MCF 10A (cell line): ENCODE measurements at regions of chr2 and their contacts with region 1.

Region 1: DNA sequence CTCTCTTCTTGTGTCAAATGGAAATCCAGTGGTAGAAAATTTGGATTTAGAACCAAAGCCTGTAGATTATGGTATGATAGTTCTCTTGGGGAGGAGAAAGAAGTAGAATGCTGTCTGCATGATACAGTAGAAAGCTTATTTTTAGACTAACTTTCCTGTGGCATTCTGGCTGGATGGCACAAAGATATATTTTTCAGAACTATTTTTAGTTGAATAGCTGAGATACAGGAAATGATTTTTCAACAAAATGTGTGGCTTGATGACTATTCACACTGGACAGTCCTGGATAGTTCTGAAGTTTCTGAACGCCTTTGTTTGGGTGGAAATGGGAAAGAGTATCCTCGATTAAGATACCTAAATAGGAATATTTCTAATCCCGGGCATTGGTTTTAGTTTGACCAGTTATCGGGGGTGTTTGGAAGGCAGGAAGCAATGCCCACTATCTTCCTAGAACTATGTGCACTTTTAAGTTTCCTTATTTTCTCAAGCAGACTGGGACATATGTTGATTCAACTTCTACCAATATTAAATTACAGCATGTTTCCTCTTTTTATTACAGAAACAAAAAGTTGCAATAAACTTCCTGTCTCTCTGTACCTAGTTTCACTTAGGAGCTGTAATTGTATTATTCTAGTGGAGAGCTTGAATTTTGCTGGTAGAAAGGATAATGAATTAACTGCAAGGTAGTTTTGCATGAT is 32.1 kb downstream of the GDF7 start:
- DNase-seq: no peak
- H3K4me3 Mint-ChIP-seq: no peak overlapping the region
- H3K27ac Mint-ChIP-seq: no peak overlapping the region
- H3K4me1 Mint-ChIP-seq: no peaks in the 10 kb centered on the region
- H3K27me3 Mint-ChIP-seq: no peaks in the 10 kb centered on the region
- CTCF ChIP-seq: no peak

Region 2: DNA sequence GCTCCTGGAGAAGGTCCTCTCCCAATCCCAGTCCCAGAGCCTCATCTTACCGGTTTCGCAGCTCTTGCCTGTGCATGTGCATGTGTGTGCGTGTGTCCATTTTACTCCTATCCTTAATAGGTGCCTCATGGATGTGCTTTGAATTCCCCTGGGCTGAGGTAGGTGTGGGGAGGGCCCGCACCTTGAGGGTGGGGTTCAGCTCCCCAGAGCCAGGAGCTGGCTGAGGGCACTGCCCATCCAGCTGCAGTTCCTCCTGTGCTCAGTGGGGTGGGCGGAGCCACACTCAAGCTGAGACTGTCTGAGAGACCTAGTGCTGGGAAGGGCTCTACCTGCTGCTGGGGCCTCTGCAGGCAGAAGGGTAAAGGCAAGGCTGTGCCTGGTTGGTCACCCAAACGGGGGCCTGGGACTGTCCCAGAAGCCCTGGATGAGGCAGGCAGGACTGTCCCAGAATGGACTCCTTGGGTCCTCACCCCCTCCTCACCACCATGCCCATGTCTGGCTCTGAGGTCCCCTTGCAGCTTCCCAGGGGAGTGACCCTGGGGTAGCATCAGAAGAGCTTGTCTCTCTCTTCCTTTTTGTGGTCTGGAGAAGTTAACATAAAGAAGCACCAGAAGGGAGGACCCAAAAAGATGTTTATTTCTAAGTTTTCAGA is 23.2 kb before region 1 on chr2:
- CTCF ChIA-PET with region 1: interaction called, 10 read pairs
- POLR2A ChIA-PET with region 1: no interaction called
- intact Hi-C with region 1: no loop called
- DNase-seq: peak; percentile 24
- H3K4me3 Mint-ChIP-seq: no peak overlapping the region
- H3K27ac Mint-ChIP-seq: no peak overlapping the region
- H3K4me1 Mint-ChIP-seq: peaks cover 6% of the 10 kb centered on the region
- H3K27me3 Mint-ChIP-seq: no peaks in the 10 kb centered on the region
- CTCF ChIP-seq: no peak

Region 3: GRCh38 chr2:20728114-20728758 is 29.2 kb after region 1 on chr2:
- CTCF ChIA-PET with region 1: no interaction called
- POLR2A ChIA-PET with region 1: no interaction called
- intact Hi-C with region 1: no loop called
- DNase-seq: peak; percentile 16
- H3K4me3 Mint-ChIP-seq: no peak overlapping the region
- H3K27ac Mint-ChIP-seq: peak overlapping the region; percentile 6
- H3K4me1 Mint-ChIP-seq: peaks cover 8% of the 10 kb centered on the region
- H3K27me3 Mint-ChIP-seq: no peaks in the 10 kb centered on the region
- CTCF ChIP-seq: no peak

Region 4: GRCh38 chr2:21067859-21068537 is 368.9 kb after region 1 on chr2:
- CTCF ChIA-PET with region 1: no interaction called
- POLR2A ChIA-PET with region 1: no interaction called
- intact Hi-C with region 1: no loop called
- DNase-seq: no peak
- H3K4me3 Mint-ChIP-seq: no peak overlapping the region
- H3K27ac Mint-ChIP-seq: no peak overlapping the region
- H3K4me1 Mint-ChIP-seq: no peaks in the 10 kb centered on the region
- H3K27me3 Mint-ChIP-seq: peaks cover 31% of the 10 kb centered on the region
- CTCF ChIP-seq: no peak